Panc1 (cell line): ENCODE measurements at regions of chr22 and their contacts with region 1.

Region 1: DNA sequence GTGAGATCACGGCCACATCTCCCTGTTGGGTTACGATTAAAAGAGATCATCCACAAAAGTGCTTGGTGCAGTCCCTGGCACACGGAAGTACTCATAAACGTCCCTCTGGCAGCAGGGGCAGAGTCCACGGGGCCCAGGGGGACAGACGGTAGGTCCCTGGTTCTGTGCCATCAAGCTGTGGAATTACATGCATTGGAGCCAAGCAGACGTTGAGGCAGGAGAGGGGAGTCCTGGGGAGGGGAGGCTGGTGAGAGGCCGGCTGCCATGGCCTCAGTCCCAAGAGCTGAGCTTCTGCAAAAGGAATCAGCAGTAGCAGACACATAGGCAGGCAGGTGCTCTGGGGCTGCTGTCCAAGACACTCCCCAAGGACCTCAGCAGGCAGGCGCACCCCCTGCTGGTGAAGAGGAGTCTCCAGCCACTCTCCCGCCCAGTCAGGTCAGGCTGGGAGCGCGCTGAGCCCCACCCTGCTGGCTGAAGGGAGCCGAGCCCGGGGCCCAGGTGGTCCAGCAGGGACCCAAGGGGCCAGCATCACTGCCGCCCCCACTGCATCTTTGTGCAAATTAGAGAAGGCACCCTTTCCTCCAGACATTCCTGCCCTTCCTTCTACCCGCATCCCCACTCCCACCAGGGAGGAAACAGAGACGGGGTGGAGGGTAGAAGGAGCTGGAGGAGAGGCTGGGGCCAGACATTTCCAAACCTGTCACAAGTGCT is 7.6 kb upstream of the KCTD17 start:
- DNase-seq: peak; percentile 24
- ATAC-seq: peak; percentile 96
- H3K4me3 ChIP-seq: no peak overlapping the region
- H3K27ac ChIP-seq: no peak overlapping the region
- H3K4me1 ChIP-seq: no peaks in the 10 kb centered on the region
- H3K27me3 ChIP-seq: no peaks in the 10 kb centered on the region
- CTCF ChIP-seq: peak; percentile 80

Region 2: DNA sequence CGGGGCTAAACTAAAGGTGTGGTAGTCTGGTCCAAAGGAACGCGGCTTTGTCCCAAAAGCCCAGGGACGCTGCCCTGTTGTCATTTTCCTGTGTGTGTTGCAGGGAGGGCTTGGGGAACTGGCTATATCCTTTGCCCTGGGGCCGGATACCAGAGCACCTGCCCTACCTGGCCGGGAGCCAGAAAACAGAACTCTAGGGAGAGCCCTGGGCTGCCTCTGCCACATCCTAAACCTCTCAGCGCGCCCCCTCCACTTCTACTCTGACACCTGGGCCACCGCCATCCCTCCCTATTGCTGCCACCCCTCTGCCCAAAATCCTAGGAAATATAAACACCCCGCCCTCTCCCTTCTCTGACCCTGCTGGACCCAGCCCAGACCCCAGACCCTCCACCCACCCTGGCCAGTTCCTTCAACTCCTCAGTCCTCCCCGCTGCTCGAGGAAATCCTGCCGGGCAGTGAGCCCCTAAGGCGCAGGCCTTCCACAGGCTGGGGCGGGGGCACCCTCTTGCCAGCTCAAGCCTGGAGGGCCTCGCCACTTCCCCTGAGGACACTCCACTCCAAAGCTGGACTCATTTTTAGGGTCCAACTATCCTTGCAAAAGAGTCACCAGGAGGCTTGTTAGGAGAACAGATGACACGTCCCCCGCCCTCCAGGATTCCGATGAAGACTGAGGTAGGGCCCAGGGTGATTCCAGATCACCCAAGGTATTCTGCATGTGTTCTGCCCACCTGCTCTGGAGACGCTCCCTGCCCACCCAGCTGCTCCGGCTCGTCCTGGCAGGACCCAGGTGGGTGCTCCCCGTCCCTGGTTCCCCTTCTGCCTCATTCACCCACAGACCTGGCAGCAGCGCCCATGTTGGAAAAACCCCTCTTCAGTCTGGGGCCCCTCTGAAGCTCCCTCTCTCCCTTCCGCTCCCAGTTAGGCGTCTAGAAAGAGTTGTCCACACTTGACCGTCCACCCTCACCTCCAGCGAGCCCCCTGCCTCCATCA is 19.7 kb after region 1 on chr22:
- CTCF ChIA-PET with region 1: no interaction called
- POLR2A ChIA-PET with region 1: no interaction called
- in situ Hi-C with region 1: no loop called
- intact Hi-C with region 1: no loop called
- DNase-seq: no peak
- ATAC-seq: no peak
- H3K4me3 ChIP-seq: no peak overlapping the region
- H3K27ac ChIP-seq: no peak overlapping the region
- H3K4me1 ChIP-seq: no peaks in the 10 kb centered on the region
- H3K27me3 ChIP-seq: no peaks in the 10 kb centered on the region
- CTCF ChIP-seq: no peak

Region 3: GRCh38 chr22:37561212-37562048 is 517.4 kb after region 1 on chr22:
- CTCF ChIA-PET with region 1: interaction called, 10 read pairs
- POLR2A ChIA-PET with region 1: no interaction called
- in situ Hi-C with region 1: no loop called
- intact Hi-C with region 1: no loop called
- DNase-seq: no peak
- ATAC-seq: peak; percentile 66
- H3K4me3 ChIP-seq: peak overlapping the region; percentile 68 to 77
- H3K27ac ChIP-seq: peak overlapping the region; percentile 84
- H3K4me1 ChIP-seq: peaks cover 32% of the 10 kb centered on the region
- H3K27me3 ChIP-seq: no peaks in the 10 kb centered on the region
- CTCF ChIP-seq: peak; percentile 86; the same call in 1 of the 2 replicates